Kidney (tissue), 22 donors: ENCODE measurements at regions of chr1 and their contacts with region 1.

Region 1: GRCh38 chr1:46043458-46044017 is 88.9 kb downstream of the PIK3R3 start:
- DNase-seq: no peak
- H3K4me3 ChIP-seq: no peak overlapping the region
- H3K27ac ChIP-seq: no peak overlapping the region
- H3K4me1 ChIP-seq: peaks cover 0 to 12% (median 11%) of the 10 kb centered on the region in 3 donors
- H3K27me3 ChIP-seq: no peaks in the 10 kb centered on the region
- CTCF ChIP-seq: no peak

Region 2: DNA sequence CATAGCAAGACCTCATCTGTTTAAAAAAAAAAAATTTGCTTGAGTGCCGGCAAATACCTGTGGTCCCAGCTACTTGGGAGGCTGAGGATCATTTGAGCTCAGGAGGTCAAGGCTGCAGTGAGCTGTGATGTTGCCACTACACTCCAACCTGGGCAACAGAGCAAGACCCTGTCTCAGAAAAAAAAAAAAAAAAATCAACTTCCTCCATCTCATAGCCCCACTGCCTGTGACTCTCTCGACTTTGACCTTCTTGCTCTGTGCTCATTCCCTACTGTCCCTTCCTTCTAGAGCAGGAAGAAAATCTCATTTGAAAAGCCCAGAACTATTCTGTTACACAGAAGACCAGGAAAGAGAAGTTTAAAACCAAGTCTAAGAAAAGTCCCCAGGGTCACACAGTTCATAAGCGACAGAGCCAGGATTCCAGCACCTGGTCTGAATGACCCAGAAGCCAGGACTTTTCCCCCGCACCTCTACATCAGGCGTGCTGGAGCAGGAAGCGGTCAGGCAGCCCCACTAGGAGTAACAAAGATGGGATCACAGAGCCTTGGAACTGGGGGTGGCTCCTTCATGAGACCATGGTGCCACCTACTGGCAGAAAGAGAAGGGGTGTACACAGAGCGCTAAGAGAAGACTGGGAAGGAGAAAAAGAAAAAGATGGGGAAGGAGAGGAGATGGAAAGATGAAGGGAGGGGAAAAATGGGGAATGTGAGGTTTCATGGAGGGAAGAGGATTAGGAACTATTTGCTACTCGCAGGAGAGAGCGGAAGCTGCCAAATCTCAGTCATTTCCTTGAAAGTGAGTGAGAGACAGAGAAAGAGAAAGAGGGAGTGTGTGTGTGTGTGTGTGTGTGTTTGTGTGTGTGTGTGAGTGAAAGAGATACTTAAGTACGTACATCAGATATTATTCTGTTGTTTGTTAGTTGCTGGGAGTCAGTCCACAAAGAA is 135.9 kb after region 1 on chr1:
- intact Hi-C with region 1: loop called (anchors 5 kb)
- DNase-seq: peak in 4 of 5 donors; percentile 85 to 97 (median 90)
- H3K4me3 ChIP-seq: no peak overlapping the region
- H3K27ac ChIP-seq: peak overlapping the region in 1 of 2 donors; percentile 4
- H3K4me1 ChIP-seq: peaks cover 2 to 35% (median 31%) of the 10 kb centered on the region in 3 donors
- H3K27me3 ChIP-seq: no peaks in the 10 kb centered on the region
- CTCF ChIP-seq: peak; percentile 95